Left ventricle myocardium inferior (tissue), 1 donor: ENCODE measurements at regions of chr7 and their contacts with region 1.

Region 1: DNA sequence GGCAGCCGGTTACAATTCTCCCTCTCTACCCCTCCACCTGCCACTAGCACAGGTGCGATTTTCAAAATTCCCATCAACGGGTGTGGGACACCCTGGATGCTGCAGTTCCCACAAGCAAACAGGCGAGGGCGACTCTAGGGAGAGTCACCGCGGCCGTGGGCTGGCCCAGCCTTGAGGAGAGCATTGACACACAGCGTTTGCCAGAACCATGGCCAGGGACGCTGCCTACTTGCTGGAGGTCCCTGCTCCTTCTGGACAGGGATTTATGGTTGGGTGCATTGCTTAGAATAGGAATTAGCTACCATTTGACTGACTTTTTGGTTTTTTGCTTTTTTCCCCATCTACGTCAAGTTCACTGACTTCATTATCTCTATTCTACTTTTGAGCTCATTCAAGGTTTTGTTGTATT is 19.0 kb upstream of the CLDN4 start:
- DNase-seq: peak; percentile 49
- H3K4me3 ChIP-seq: no peak overlapping the region
- H3K27ac ChIP-seq: no peak overlapping the region
- H3K4me1 ChIP-seq: no peaks in the 10 kb centered on the region
- H3K27me3 ChIP-seq: peaks cover 61% of the 10 kb centered on the region
- CTCF ChIP-seq: peak; percentile 82

Region 2: GRCh38 chr7:73851410-73852234 is 39.9 kb after region 1 on chr7:
- intact Hi-C with region 1: loop called (anchors 5 kb)
- DNase-seq: no peak
- H3K4me3 ChIP-seq: no peak overlapping the region
- H3K27ac ChIP-seq: peak overlapping the region; percentile 66
- H3K4me1 ChIP-seq: peaks cover 12% of the 10 kb centered on the region
- H3K27me3 ChIP-seq: peaks cover 35% of the 10 kb centered on the region
- CTCF ChIP-seq: no peak

Region 3: DNA sequence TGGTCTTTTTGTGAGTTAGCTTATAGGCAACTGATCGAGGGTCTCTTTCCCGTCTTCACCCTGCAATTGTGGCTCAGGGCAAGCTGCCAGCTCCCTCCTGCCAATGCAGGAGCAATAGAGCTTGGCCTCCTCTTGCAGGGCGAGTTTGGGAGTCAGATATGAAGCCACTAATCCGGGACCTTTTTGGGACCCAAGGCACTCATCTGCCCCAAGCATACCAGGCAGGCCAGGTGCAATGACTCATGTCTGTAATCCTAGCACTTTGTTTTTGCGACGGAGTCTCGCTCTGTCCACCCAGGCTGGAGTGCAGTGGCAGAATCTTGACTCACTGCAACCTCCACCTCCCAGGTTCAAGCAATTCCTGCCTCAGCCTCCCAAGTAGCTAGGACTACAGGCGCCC is 292.9 kb after region 1 on chr7:
- intact Hi-C with region 1: no loop called
- DNase-seq: no peak
- H3K4me3 ChIP-seq: no peak overlapping the region
- H3K27ac ChIP-seq: no peak overlapping the region
- H3K4me1 ChIP-seq: no peaks in the 10 kb centered on the region
- H3K27me3 ChIP-seq: no peaks in the 10 kb centered on the region
- CTCF ChIP-seq: no peak